ENCODE measurements at regions of chr11 and their contacts with region 1.

Region 1: GRCh38 chr11:57480409-57481137 is 20.2 kb downstream of the RTN4RL2 start:
- DNase-seq: peak; percentile 47 to 61 (median 60)
- H3K4me3 ChIP-seq: no peak overlapping the region
- H3K4me3 Mint-ChIP-seq: no peak overlapping the region
- H3K27ac ChIP-seq: no peak overlapping the region
- H3K27ac Mint-ChIP-seq: peak overlapping the region in 1 of 7 donors; percentile 26
- H3K4me1 ChIP-seq: peaks cover 55 to 57% of the 10 kb centered on the region in 2 donors
- H3K4me1 Mint-ChIP-seq: peaks cover 56% of the 10 kb centered on the region
- H3K27me3 ChIP-seq: peaks cover 7 to 14% of the 10 kb centered on the region in 2 donors
- H3K27me3 Mint-ChIP-seq: peaks cover 17 to 42% (median 25%) of the 10 kb centered on the region in 3 donors
- CTCF ChIP-seq: peak; percentile 71

Region 2: GRCh38 chr11:57345555-57346211 is 134.9 kb before region 1 on chr11:
- intact Hi-C with region 1: loop called (anchors 5 kb)
- DNase-seq: peak; percentile 49 to 77 (median 73)
- H3K4me3 ChIP-seq: no peak overlapping the region
- H3K4me3 Mint-ChIP-seq: no peak overlapping the region
- H3K27ac ChIP-seq: no peak overlapping the region
- H3K27ac Mint-ChIP-seq: peak overlapping the region in 1 of 7 donors; percentile 55
- H3K4me1 ChIP-seq: no peaks in the 10 kb centered on the region
- H3K4me1 Mint-ChIP-seq: peaks cover 8% of the 10 kb centered on the region
- H3K27me3 ChIP-seq: no peaks in the 10 kb centered on the region
- H3K27me3 Mint-ChIP-seq: peaks cover 0 to 9% (median 4%) of the 10 kb centered on the region in 3 donors
- CTCF ChIP-seq: peak; percentile 88

Region 3: DNA sequence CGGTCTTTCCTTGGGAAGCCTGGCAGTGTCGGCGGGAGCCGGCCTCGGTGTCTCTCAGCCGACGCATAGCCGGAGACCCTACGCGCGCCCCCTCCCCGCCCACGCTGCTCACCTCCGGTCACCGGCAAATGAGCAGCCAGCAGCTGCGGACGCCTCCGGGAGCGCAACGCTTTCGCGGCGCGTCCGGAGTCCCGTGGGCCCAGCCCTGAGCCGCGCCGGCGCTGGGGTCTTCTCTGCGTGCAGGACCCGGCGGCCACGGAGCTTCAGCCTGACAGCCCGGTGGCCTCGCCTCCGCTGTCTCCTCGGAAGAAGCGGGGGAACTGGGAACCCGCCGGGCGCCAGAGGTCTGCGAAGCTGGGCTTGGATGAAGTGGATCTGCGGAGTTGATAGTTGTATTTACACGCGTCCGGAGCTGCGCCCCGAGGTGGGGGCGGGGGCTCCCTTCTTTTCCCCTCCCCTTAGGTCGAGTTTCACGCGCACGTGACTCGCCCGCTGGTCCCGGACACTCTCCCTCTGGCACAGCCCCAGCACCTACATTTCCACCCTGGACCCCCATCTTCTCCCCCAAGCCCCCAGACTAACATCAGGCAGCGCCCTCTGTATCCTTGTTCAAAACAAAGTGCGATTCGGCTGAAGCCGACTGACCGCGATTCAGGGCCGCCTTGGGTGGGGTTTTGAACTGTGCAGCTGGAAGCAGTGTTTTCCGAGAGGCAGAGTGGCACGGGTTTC is 34.9 kb after region 1 on chr11 and contains the start of gene SLC43A1:
- intact Hi-C with region 1: loop called in 1 of 2 experiments (anchors 5 kb)
- DNase-seq: no peak
- H3K4me3 ChIP-seq: peak within 1 kb of the TSS; percentile 63 to 83 (median 80)
- H3K4me3 Mint-ChIP-seq: peak within 1 kb of the TSS; percentile 99
- H3K27ac ChIP-seq: peak within 1 kb of the TSS in 1 of 2 donors; percentile 20
- H3K27ac Mint-ChIP-seq: peak within 1 kb of the TSS in 5 of 7 donors; percentile 46 to 81 (median 67)
- H3K4me1 ChIP-seq: peaks cover 16 to 22% of the 10 kb centered on the region in 2 donors
- H3K4me1 Mint-ChIP-seq: peaks cover 26% of the 10 kb centered on the region
- H3K27me3 ChIP-seq: no peaks in the 10 kb centered on the region
- H3K27me3 Mint-ChIP-seq: peaks cover 1 to 13% (median 6%) of the 10 kb centered on the region in 3 donors
- CTCF ChIP-seq: no peak
- polyA plus RNA-seq, gene SLC43A1: 5.4 to 6.2 (median 5.8) TPM